K562 (cell line): ENCODE measurements at regions of chr1 and their contacts with region 1.

Region 1: DNA sequence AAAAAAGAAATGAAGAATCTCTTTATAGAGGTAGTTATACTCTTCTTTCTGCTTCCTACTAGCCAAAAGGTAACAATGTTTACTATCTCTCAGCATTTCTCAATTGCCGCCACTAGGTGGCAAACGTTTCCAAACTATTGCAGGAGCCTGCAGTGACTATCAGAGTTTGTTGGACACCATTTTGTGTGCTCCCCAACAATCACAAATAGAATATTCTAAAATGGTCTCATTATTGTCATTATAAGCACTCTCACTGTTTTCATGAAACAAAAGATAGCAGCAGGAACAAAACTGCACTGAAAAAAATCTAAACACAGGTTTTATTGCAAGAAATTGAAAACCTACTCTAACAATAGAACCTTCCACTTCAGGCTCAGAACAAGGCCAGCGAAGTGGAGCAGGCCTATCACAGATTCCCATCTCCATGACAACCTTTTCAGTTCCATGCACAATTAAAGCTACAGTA is 83.9 kb upstream of the PLPPR4 start:
- DNase-seq: peak; percentile 44 to 83 (median 50)
- ATAC-seq: peak; percentile 99
- H3K4me3 ChIP-seq: no peak overlapping the region
- H3K27ac ChIP-seq: no peak overlapping the region
- H3K4me1 ChIP-seq: no peaks in the 10 kb centered on the region
- H3K27me3 ChIP-seq: no peaks in the 10 kb centered on the region
- CTCF ChIP-seq: peak; percentile 67 to 87 (median 73)
- EP300 ChIP-seq: no peak
- POLR2A ChIP-seq: no peak
- RAD21 ChIP-seq: peak; percentile 92 to 94

Region 2: GRCh38 chr1:99469550-99469971 is 289.2 kb after region 1 on chr1:
- CTCF ChIA-PET with region 1: no interaction called
- POLR2A ChIA-PET with region 1: no interaction called
- in situ Hi-C with region 1: no loop called
- intact Hi-C with region 1: no loop called
- DNase-seq: no peak
- ATAC-seq: no peak
- H3K4me3 ChIP-seq: no peak overlapping the region
- H3K27ac ChIP-seq: no peak overlapping the region
- H3K4me1 ChIP-seq: no peaks in the 10 kb centered on the region
- H3K27me3 ChIP-seq: no peaks in the 10 kb centered on the region
- CTCF ChIP-seq: no peak
- EP300 ChIP-seq: no peak
- POLR2A ChIP-seq: no peak
- RAD21 ChIP-seq: no peak

Region 3: DNA sequence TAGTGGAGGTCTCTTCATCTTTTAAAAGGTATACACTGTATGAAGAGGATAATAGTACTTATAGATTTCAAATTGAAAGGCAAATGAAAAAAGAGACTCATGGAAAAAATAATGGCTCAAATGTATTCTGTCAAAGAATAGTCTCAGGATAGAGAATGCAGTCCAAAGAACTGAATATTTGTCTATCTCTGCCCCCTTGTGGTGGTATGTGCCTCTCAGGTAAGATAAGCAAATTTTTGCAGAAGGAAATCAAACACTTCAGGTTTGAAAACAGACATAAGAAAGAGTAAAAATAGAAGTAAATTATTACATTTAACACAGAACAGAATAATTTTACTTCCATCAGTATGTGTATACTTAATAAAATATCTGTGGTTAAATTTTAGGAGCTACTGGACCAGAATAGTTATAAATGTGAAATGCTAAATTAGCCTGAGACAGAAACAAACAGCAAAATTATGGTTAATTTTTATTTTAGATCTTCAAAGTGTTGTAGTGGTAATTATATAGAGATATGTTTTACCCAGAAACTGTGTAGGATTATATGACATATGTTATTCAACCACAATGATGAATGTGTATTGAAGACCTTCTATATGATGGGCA is 301.1 kb after region 1 on chr1:
- CTCF ChIA-PET with region 1: interaction called, 10 read pairs
- POLR2A ChIA-PET with region 1: no interaction called
- in situ Hi-C with region 1: no loop called
- intact Hi-C with region 1: loop called (anchors 1 kb)
- DNase-seq: peak; percentile 35 to 69 (median 38)
- ATAC-seq: peak; percentile 89
- H3K4me3 ChIP-seq: no peak overlapping the region
- H3K27ac ChIP-seq: no peak overlapping the region
- H3K4me1 ChIP-seq: no peaks in the 10 kb centered on the region
- H3K27me3 ChIP-seq: no peaks in the 10 kb centered on the region
- CTCF ChIP-seq: peak; percentile 48 to 79 (median 50); a peak in 4 of 6 replicates
- EP300 ChIP-seq: no peak
- POLR2A ChIP-seq: no peak
- RAD21 ChIP-seq: peak; percentile 89

Region 4: GRCh38 chr1:99526926-99527477 is 346.6 kb after region 1 on chr1:
- CTCF ChIA-PET with region 1: no interaction called
- POLR2A ChIA-PET with region 1: no interaction called
- in situ Hi-C with region 1: no loop called
- intact Hi-C with region 1: loop called (anchors 1 kb)
- DNase-seq: peak; percentile 14 to 36 (median 20)
- ATAC-seq: peak; percentile 84
- H3K4me3 ChIP-seq: no peak overlapping the region
- H3K27ac ChIP-seq: no peak overlapping the region
- H3K4me1 ChIP-seq: no peaks in the 10 kb centered on the region; a peak in 1 of 5 replicates
- H3K27me3 ChIP-seq: no peaks in the 10 kb centered on the region
- CTCF ChIP-seq: peak in 2 of 3 experiments; percentile 27 to 67; a peak in 2 of 6 replicates
- EP300 ChIP-seq: no peak
- POLR2A ChIP-seq: no peak
- RAD21 ChIP-seq: peak; percentile 64 to 71

Region 5: DNA sequence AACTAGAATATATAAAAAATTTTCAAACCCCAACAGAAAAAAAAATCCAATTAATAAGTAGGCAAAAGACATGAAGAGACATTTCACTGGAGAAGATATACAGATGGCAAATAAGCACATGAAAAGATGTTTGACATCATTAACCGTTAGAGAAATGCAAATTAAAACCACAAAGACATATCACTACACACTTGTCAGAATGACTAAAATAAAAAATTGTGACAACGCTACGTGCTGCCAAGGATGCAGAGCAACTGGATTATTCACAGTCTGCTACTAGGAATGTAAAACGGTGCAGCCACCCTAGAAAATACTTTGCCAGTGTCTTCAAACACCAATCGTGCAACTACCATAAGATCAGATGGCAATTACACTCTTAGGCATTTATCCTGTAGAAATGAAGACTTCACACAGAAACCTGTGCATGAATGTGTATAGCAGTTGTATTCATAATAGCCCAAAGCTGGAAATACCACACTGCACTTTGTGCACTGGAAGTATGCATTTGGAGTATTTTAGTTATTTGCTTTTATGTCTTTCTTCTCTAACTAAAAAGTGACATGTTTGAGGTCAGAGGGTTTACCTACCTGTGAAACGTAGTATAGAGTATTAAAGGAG is 390.2 kb after region 1 on chr1:
- CTCF ChIA-PET with region 1: no interaction called
- POLR2A ChIA-PET with region 1: no interaction called
- in situ Hi-C with region 1: no loop called
- intact Hi-C with region 1: no loop called
- DNase-seq: no peak
- ATAC-seq: no peak
- H3K4me3 ChIP-seq: no peak overlapping the region
- H3K27ac ChIP-seq: no peak overlapping the region
- H3K4me1 ChIP-seq: peaks cover 4 to 6% of the 10 kb centered on the region in 2 experiments; a peak in 3 of 5 replicates
- H3K27me3 ChIP-seq: no peaks in the 10 kb centered on the region
- CTCF ChIP-seq: no peak
- EP300 ChIP-seq: no peak
- POLR2A ChIP-seq: no peak
- RAD21 ChIP-seq: no peak

Region 6: DNA sequence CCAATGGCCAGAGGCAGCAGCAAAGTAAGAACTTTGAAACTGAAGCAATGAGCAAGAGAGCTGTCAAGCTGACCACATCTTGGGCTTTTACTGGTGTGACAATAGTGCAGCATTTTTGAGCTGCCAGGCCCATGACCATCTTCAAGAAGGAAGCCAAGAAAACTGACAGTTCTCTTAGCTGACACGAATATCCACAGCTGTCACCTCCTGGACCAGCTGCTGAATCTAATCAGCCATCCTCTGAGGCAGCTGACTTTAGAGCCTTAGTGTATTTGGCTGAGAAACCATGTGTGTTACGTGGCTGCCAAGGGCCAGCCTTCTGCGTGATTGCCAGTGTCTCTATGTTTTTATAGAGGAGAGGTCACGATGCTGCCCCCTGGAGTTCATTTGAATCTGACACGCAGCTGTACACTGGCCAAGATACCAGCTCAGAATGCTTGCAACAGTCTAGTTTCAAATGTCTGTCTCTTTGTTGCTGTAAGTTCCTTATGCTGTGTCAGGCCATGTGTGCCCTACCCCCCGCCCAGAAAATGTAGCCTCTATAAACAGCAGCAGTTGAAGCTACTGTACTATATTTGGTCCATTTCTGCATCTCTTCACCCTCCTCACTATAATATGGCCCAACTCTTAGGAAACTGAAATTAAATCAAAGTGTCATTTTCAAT is 505.3 kb after region 1 on chr1:
- CTCF ChIA-PET with region 1: interaction called, 11 read pairs
- POLR2A ChIA-PET with region 1: no interaction called
- in situ Hi-C with region 1: no loop called
- intact Hi-C with region 1: loop called (anchors 1 kb)
- DNase-seq: peak; percentile 36 to 79 (median 45)
- ATAC-seq: peak; percentile 98
- H3K4me3 ChIP-seq: no peak overlapping the region
- H3K27ac ChIP-seq: no peak overlapping the region; the same call in 2 of the 3 replicates
- H3K4me1 ChIP-seq: no peaks in the 10 kb centered on the region
- H3K27me3 ChIP-seq: no peaks in the 10 kb centered on the region
- CTCF ChIP-seq: peak; percentile 65 to 82 (median 70)
- EP300 ChIP-seq: no peak
- POLR2A ChIP-seq: no peak
- RAD21 ChIP-seq: peak; percentile 46 to 79

Region 7: GRCh38 chr1:99707535-99708142 is 527.3 kb after region 1 on chr1:
- CTCF ChIA-PET with region 1: interaction called, 5 read pairs
- POLR2A ChIA-PET with region 1: no interaction called
- in situ Hi-C with region 1: loop called (anchors 10 kb)
- intact Hi-C with region 1: loop called (anchors 1 kb)
- DNase-seq: peak; percentile 56 to 74 (median 58)
- ATAC-seq: peak; percentile 89
- H3K4me3 ChIP-seq: no peak overlapping the region
- H3K27ac ChIP-seq: no peak overlapping the region
- H3K4me1 ChIP-seq: peaks cover 2 to 6% of the 10 kb centered on the region in 2 experiments; a peak in 4 of 5 replicates
- H3K27me3 ChIP-seq: no peaks in the 10 kb centered on the region
- CTCF ChIP-seq: peak; percentile 64 to 86 (median 86)
- EP300 ChIP-seq: no peak
- POLR2A ChIP-seq: no peak
- RAD21 ChIP-seq: peak; percentile 83 to 87